ENCODE measurements at regions of chr15 and their contacts with region 1.

Region 1: DNA sequence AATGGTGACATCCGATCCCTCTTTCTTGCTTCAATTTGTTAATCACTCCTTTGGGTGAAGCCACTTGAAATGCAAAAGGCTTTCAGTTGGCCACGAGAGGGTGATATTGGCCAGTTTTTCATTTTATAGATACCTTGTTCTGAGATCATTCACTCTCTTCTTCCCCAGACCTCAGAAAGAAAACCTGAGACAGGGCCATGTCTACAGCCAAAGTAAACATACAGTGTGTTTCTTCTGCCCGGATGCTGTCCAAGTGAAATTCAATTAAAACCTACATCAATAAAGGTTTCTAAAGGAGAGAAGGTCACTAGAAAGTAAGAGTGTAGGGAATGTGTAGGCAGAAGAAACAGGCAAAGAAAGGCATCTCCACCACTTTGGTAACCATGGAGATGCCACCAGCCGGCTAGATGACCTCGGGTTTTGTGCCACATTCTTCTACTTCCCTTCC is 39.5 kb upstream of the FMN1 start:
- DNase-seq: peak; percentile 6
- ATAC-seq: no peak
- H3K4me3 Mint-ChIP-seq: no peak overlapping the region
- H3K27ac Mint-ChIP-seq: no peak overlapping the region
- H3K4me1 Mint-ChIP-seq: no peaks in the 10 kb centered on the region
- H3K27me3 Mint-ChIP-seq: peaks cover 4% of the 10 kb centered on the region
- CTCF ChIP-seq: no peak

Region 2: DNA sequence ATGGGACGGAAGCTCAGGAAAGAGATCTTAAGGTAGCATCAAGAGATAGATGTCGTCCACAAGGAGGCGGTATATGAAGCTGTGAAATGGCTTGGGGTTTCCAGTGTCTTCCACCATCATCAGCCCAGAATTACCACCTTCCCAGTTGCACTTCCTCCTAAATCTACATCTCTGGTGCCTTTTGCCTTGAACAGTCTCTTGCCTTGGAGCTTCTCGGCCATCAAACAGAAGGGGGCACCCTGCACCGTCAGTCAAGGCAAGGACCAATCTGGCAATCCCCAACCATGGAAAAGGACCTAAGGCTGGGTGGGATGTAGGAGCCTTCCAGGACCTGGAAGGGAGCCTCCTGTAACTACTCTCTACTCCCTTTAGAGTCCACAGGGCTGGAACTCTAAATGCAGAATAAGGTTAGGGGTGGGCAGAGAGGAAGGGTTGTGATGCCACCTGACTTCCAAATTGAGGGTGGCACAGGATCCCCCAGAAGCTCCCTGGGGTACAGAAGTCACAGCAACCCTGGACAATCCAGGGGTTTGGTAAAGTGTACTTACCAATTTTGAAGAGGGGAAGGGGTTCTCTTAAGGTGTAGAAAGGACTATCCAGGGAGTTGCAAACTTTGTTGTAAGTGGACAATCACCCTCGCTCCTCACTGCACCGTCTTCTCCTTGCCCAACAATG is 75.7 kb after region 1 on chr15:
- CTCF ChIA-PET with region 1: no interaction called
- POLR2A ChIA-PET with region 1: no interaction called
- intact Hi-C with region 1: loop called (anchors 10 kb)
- DNase-seq: no peak
- ATAC-seq: no peak
- H3K4me3 Mint-ChIP-seq: no peak overlapping the region
- H3K27ac Mint-ChIP-seq: no peak overlapping the region
- H3K4me1 Mint-ChIP-seq: no peaks in the 10 kb centered on the region
- H3K27me3 Mint-ChIP-seq: peaks cover 36% of the 10 kb centered on the region
- CTCF ChIP-seq: no peak

Measured in activated CD8-positive, alpha-beta T cell treated with anti-CD3 and anti-CD28 coated beads for 36 hours (primary cell).